Activated T-helper 1 cell treated with anti-CD3 and anti-CD28 coated beads, Interleukin-12 subunit alpha, Interleukin-12 subunit beta, Interleukin-2, Interleukin-4 antibody, amounts not matched to agents 30 ng/mL and 10 ng/mL and 1 ng/mL, durations not matched to agents 14 hours and 24 hours and 36 hours (primary cell): ENCODE measurements at regions of chr3 and their contacts with region 1.

Region 1: DNA sequence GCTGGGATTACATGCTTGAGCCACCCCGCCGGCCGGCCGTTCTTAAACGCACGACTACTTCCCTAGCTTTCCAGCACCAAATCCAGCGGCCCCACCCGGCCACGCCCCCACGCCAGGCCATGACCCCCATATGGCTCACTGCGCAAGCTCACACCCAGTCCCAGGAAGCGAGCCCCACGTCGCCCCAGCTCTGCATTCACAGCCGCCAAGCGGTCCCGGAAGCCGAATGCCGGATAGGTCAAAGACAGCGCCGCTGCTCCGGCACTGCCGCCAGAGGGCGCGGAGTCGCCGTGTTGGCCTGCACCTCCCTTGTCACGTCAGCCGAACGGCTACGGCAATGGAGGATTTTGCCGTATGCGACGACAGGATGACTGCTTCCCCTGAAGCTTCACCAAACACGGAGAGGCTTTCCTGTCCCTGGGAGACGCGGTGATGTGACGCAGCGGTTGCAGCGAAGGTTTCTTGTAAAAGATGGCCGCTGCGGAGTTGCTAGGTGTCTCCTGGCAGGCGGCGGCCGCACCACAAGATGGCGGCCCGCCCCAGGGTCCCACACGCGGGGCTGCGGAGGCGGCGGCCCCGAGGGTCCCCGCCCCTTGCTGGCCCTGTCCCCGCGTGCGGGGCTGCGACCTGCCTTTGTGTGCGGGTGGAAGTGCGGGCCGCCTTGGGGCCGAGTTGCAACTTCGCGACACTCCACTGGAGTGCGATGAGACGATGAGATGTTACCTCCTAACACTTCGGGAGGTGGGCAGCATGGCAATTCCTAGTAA is 30.2 kb upstream of the RPN1 start:
- DNase-seq: peak; percentile 96
- H3K4me3 Mint-ChIP-seq: peak overlapping the region; percentile 85
- H3K27ac Mint-ChIP-seq: peak overlapping the region; percentile 89
- H3K4me1 Mint-ChIP-seq: peaks cover 29% of the 10 kb centered on the region
- H3K27me3 Mint-ChIP-seq: no peaks in the 10 kb centered on the region

Region 2: GRCh38 chr3:128650096-128651050 is 30.4 kb before region 1 on chr3 and contains the start of gene RPN1:
- intact Hi-C with region 1: loop called (anchors 1 kb)
- DNase-seq: peak; percentile 94
- H3K4me3 Mint-ChIP-seq: peak within 1 kb of the TSS; percentile 90
- H3K27ac Mint-ChIP-seq: peak within 1 kb of the TSS; percentile 92
- H3K4me1 Mint-ChIP-seq: peaks cover 26% of the 10 kb centered on the region
- H3K27me3 Mint-ChIP-seq: no peaks in the 10 kb centered on the region
- total RNA-seq, gene RPN1: 190 and 194 TPM in 2 replicates

Region 3: DNA sequence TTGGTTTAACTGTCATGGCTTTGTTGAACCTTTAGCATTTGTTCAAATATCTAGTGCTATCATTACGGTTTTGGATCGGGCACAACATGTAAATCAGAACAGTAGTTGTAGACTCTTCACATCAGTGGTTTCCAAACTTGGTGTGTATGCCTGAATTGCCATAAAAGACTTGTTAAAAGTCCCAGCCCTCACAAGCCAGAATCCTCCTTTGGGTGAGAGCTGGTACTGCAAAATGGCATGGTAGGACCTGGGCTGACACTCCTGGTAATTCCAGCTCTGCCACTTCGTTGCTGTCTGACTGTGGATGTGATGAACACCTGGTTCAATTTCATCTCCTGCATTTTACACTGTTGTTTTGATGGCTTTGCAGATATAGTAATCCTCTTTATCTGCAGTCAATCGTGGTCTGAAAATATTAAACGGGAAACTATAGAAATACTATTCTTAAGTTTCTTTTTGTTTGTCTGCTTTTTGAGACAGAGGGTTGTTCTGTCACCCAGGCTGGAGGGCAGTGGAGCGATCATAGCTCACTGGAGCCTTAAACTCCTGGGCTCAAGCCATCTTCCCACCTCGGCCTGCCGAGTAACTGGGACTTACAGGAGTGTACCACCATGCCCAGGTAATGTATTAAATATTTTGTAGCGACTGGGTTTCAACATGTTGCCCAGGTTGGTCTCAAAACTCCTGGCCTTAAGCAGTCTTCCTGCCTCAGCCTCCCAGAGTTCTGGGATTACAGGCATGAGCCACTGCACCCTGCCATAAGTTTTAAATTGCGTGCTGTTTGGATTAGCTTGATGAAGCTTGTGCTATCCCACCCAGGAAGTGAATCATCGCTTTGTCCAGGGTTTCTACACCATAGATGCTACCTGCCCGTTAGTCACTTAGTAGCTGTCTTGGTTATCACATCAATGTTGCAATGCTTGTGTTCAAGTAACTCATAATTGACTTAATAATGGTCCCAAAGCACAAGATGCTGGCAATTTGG is 106.8 kb after region 1 on chr3:
- intact Hi-C with region 1: loop called (anchors 1 kb)
- DNase-seq: no peak
- H3K4me3 Mint-ChIP-seq: peak overlapping the region; percentile 70
- H3K27ac Mint-ChIP-seq: peak overlapping the region; percentile 97
- H3K4me1 Mint-ChIP-seq: peaks cover 83% of the 10 kb centered on the region
- H3K27me3 Mint-ChIP-seq: no peaks in the 10 kb centered on the region

Region 4: GRCh38 chr3:128794770-128795649 is 114.2 kb after region 1 on chr3:
- intact Hi-C with region 1: loop called (anchors 1 kb)
- DNase-seq: peak; percentile 62
- H3K4me3 Mint-ChIP-seq: peak overlapping the region; percentile 49
- H3K27ac Mint-ChIP-seq: peak overlapping the region; percentile 92
- H3K4me1 Mint-ChIP-seq: peaks cover 79% of the 10 kb centered on the region
- H3K27me3 Mint-ChIP-seq: no peaks in the 10 kb centered on the region

Region 5: GRCh38 chr3:128845778-128846485 is 165.1 kb after region 1 on chr3:
- intact Hi-C with region 1: loop called (anchors 1 kb)
- DNase-seq: peak; percentile 75
- H3K4me3 Mint-ChIP-seq: peak overlapping the region; percentile 77
- H3K27ac Mint-ChIP-seq: peak overlapping the region; percentile 90
- H3K4me1 Mint-ChIP-seq: peaks cover 18% of the 10 kb centered on the region
- H3K27me3 Mint-ChIP-seq: no peaks in the 10 kb centered on the region

Region 6: DNA sequence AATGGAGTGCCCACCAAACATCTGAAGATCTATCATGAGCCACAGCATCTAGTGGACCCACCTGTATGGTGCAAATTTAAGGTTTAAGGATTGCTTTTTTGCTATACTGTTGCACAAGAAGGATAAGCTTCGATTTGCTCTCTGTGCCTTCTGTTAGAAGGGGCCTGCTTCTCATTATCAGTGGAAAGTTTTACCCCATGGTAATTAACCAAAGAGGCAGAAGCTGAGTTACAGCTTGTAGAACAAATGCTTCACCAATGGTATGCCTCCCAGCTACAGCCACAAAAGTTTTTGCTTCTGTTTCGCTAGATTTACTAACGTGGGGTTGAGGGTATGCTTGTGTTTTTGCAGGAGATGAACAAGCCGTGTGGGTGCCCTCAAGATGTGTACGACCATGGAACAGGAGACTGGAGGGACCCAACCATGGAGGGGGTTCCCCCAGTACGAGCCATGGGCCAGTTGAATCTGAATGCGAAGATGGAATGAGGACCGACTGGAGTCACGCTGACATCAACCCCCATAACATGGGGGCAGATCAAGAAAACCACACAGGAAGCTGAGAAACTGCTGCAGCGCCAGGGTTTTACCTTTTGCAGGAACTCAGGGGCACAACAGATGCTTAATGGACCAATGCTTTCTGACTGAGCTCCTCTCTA is 242.1 kb after region 1 on chr3:
- intact Hi-C with region 1: loop called (anchors 1 kb)
- DNase-seq: peak; percentile 46
- H3K4me3 Mint-ChIP-seq: peak overlapping the region; percentile 67
- H3K27ac Mint-ChIP-seq: peak overlapping the region; percentile 70
- H3K4me1 Mint-ChIP-seq: peaks cover 37% of the 10 kb centered on the region
- H3K27me3 Mint-ChIP-seq: peaks cover 4% of the 10 kb centered on the region